ENCODE measurements at regions of chr5 and their contacts with region 1.

Region 1: GRCh38 chr5:1641560-1642166 is 117.9 kb upstream of the LPCAT1 start:
- DNase-seq: peak; percentile 84
- ATAC-seq: peak; percentile 85
- H3K4me3 ChIP-seq: no peak overlapping the region
- H3K27ac ChIP-seq: no peak overlapping the region
- H3K4me1 ChIP-seq: no peaks in the 10 kb centered on the region
- H3K27me3 ChIP-seq: peaks cover 53% of the 10 kb centered on the region
- CTCF ChIP-seq: peak; percentile 99
- POLR2A ChIP-seq: no peak
- RAD21 ChIP-seq: peak; percentile 88

Region 2: DNA sequence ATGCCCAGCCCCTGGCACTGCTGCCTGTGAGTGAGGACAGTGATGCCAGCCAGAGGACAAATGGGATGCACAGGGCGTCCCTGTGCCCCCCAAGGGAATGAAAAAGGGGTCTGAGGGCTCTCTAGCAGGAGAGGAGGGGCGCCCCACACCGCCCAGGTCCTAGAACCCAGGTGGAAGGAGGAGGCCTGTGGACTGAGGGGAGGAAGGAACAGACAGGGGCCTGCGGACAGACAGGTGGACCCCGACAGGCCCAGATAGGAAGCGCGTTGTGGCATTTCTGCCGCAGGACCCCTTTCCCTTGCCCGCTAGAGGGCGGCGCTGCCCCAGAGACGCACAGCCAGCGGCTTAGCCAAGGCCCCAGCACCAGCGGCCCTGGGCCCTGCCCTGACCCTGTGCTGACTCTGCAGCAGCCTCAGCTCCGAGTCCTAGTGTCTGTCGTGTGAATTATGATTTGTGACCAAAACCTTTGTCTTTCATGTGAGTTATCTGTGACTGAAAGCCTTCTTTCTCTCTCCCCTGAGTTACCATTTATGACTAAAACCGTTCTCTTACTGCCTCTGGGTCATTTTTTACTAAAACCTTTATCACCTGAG is 718.3 kb before region 1 on chr5:
- CTCF ChIA-PET with region 1: interaction called, 7 read pairs
- POLR2A ChIA-PET with region 1: no interaction called
- dilution Hi-C with region 1: no loop called
- in situ Hi-C with region 1: no loop called
- intact Hi-C with region 1: loop called (anchors 2 kb)
- DNase-seq: peak; percentile 55
- ATAC-seq: peak; percentile 97
- H3K4me3 ChIP-seq: no peak overlapping the region
- H3K27ac ChIP-seq: no peak overlapping the region
- H3K4me1 ChIP-seq: no peaks in the 10 kb centered on the region; the same call in 1 of the 2 replicates
- H3K27me3 ChIP-seq: peaks cover 7% of the 10 kb centered on the region
- CTCF ChIP-seq: peak; percentile 93
- POLR2A ChIP-seq: 0 out of 2 replicates have a peak, but pooled peaks have one; percentile 26
- RAD21 ChIP-seq: peak; percentile 95

Region 3: GRCh38 chr5:1167728-1168709 is 473.6 kb before region 1 on chr5:
- CTCF ChIA-PET with region 1: interaction called, 11 read pairs
- POLR2A ChIA-PET with region 1: no interaction called
- dilution Hi-C with region 1: no loop called
- in situ Hi-C with region 1: loop called (anchors 5 kb)
- intact Hi-C with region 1: loop called (anchors 2 kb)
- DNase-seq: peak; percentile 61
- ATAC-seq: peak; percentile 95
- H3K4me3 ChIP-seq: no peak overlapping the region
- H3K27ac ChIP-seq: no peak overlapping the region
- H3K4me1 ChIP-seq: peaks cover 2% of the 10 kb centered on the region; the same call in 1 of the 2 replicates
- H3K27me3 ChIP-seq: peaks cover 14% of the 10 kb centered on the region; the same call in 1 of the 2 replicates
- CTCF ChIP-seq: peak; percentile 79
- POLR2A ChIP-seq: no peak
- RAD21 ChIP-seq: peak; percentile 65

Region 4: GRCh38 chr5:1344975-1345838 is 296.5 kb before region 1 on chr5 and contains the start of gene CLPTM1L:
- CTCF ChIA-PET with region 1: no interaction called
- POLR2A ChIA-PET with region 1: no interaction called
- dilution Hi-C with region 1: no loop called
- in situ Hi-C with region 1: loop called (anchors 25 kb)
- intact Hi-C with region 1: loop called (anchors 2 kb)
- DNase-seq: peak; percentile 81
- ATAC-seq: peak; percentile 94
- H3K4me3 ChIP-seq: peak within 1 kb of the TSS; percentile 98
- H3K27ac ChIP-seq: peak within 1 kb of the TSS; percentile 92
- H3K4me1 ChIP-seq: peaks cover 8% of the 10 kb centered on the region; the same call in 1 of the 2 replicates
- H3K27me3 ChIP-seq: no peaks in the 10 kb centered on the region
- CTCF ChIP-seq: no peak
- POLR2A ChIP-seq: peak; percentile 87
- RAD21 ChIP-seq: no peak
- total RNA-seq, gene CLPTM1L: 101 and 137 TPM in 2 replicates

Region 5: GRCh38 chr5:1380011-1380817 is 261.4 kb before region 1 on chr5:
- CTCF ChIA-PET with region 1: interaction called, 3 read pairs
- POLR2A ChIA-PET with region 1: no interaction called
- dilution Hi-C with region 1: no loop called
- in situ Hi-C with region 1: no loop called
- intact Hi-C with region 1: loop called (anchors 1 kb)
- DNase-seq: peak; percentile 4
- ATAC-seq: peak; percentile 90
- H3K4me3 ChIP-seq: no peak overlapping the region
- H3K27ac ChIP-seq: no peak overlapping the region
- H3K4me1 ChIP-seq: no peaks in the 10 kb centered on the region
- H3K27me3 ChIP-seq: peaks cover 29% of the 10 kb centered on the region
- CTCF ChIP-seq: peak; percentile 41
- POLR2A ChIP-seq: no peak
- RAD21 ChIP-seq: peak; percentile 19; the same call in 1 of the 2 replicates

Region 6: DNA sequence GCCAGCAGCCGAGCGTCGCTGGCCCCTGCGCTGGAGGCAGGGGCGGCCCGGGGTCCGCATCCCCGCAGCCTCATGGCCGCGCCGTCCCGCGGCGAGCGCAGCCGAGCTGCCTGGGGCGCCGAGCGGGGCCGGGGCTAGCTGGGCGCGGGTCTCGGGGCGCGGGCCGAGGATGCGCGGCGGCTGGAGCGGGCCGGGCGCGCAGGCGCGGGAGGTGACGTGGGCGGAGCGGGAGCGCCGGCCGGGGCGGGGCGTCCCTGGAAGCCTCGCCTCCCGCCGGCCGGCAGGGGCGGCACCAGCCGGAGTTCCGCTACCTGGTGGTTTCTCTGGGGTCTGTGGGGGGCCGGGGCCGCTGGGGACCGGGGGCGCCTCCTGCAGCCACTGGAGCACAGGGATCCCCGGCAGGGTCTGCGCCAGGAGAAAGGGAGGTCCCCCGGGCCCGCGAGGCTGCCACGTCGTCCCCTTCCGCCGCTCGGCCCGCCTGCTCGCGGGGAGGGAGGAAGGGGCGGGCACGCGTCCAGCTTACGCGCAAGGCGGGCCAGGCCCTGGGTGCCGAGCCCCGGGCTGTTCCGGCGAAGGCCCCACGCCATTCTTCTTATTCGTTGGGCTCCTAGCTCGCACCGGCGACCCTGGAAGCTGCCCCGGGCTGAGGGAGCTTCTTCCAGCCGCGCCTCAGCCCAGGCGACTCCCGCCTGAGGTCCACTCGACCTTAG is 117.7 kb before region 1 on chr5 and contains the start of gene LPCAT1:
- CTCF ChIA-PET with region 1: no interaction called
- POLR2A ChIA-PET with region 1: no interaction called
- dilution Hi-C with region 1: no loop called
- in situ Hi-C with region 1: no loop called
- intact Hi-C with region 1: loop called (anchors 5 kb)
- DNase-seq: peak; percentile 60
- ATAC-seq: peak; percentile 89
- H3K4me3 ChIP-seq: peak within 1 kb of the TSS; percentile 99
- H3K27ac ChIP-seq: peak within 1 kb of the TSS; percentile 92
- H3K4me1 ChIP-seq: peaks cover 9% of the 10 kb centered on the region
- H3K27me3 ChIP-seq: peaks cover 6% of the 10 kb centered on the region
- CTCF ChIP-seq: no peak
- POLR2A ChIP-seq: peak; percentile 50
- RAD21 ChIP-seq: no peak
- total RNA-seq, gene LPCAT1: 17.7 and 22.2 TPM in 2 replicates

Region 7: DNA sequence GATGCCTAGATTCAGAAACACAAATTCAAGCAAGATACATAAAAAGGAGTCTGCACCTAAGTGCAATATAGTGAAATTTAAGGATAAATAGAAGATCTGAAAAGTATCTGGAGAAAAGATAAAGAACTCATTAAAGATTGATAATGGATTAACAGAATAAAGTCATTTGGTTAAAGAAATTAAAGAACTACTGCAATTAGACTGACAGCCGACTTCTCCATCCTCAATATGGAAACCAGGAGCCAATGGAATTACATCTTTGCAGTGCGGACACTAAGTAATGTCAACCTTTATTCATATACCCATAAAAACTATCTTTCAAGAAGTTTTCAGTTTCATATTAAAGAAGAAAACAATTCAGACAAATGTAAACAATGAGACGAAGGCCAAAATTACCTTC is 77.0 kb after region 1 on chr5:
- CTCF ChIA-PET with region 1: no interaction called
- POLR2A ChIA-PET with region 1: no interaction called
- dilution Hi-C with region 1: no loop called
- in situ Hi-C with region 1: no loop called
- intact Hi-C with region 1: no loop called
- DNase-seq: no peak
- ATAC-seq: no peak
- H3K4me3 ChIP-seq: no peak overlapping the region
- H3K27ac ChIP-seq: no peak overlapping the region
- H3K4me1 ChIP-seq: no peaks in the 10 kb centered on the region
- H3K27me3 ChIP-seq: no peaks in the 10 kb centered on the region; the same call in 1 of the 2 replicates
- CTCF ChIP-seq: no peak
- POLR2A ChIP-seq: no peak
- RAD21 ChIP-seq: no peak